Activated B cell treated with CpG ODN at 0.5 μM for 24 hours (primary cell): ENCODE measurements at regions of chr1 and their contacts with region 1.

Region 1: GRCh38 chr1:167627865-167628641 is 2.0 kb upstream of the RCSD1 start:
- DNase-seq: peak; percentile 52
- ATAC-seq: peak; percentile 70
- H3K4me3 Mint-ChIP-seq: peak overlapping the region; percentile 94
- H3K27ac Mint-ChIP-seq: peak overlapping the region; percentile 98
- H3K4me1 Mint-ChIP-seq: peaks cover 76% of the 10 kb centered on the region
- H3K27me3 Mint-ChIP-seq: no peaks in the 10 kb centered on the region
- CTCF ChIP-seq: no peak

Region 2: GRCh38 chr1:167184081-167184480 is 444.0 kb before region 1 on chr1:
- CTCF ChIA-PET with region 1: no interaction called
- POLR2A ChIA-PET with region 1: no interaction called
- intact Hi-C with region 1: no loop called
- DNase-seq: no peak
- ATAC-seq: no peak
- H3K4me3 Mint-ChIP-seq: no peak overlapping the region
- H3K27ac Mint-ChIP-seq: no peak overlapping the region
- H3K4me1 Mint-ChIP-seq: no peaks in the 10 kb centered on the region
- H3K27me3 Mint-ChIP-seq: peaks cover 5% of the 10 kb centered on the region
- CTCF ChIP-seq: no peak

Region 3: DNA sequence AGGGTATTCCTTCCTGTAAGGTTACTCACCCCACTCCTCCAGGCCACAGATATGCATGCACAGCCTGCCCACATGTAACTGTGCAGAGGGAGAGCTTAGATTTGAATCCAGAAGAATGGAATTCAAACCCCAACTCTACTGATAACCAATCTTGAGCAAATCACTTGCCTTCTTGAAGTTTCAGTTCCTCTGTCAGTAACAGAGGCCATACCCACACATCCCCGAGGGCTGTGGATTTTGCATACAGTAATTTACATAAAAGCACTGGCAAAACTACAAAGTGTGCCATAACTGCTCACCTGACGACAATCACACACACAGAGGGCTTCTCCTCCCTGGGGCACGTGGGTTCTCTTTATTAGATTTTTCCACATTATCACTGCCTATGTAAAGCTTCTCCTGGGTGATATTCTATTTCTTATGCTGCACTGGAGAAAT is 128.4 kb before region 1 on chr1:
- CTCF ChIA-PET with region 1: no interaction called
- POLR2A ChIA-PET with region 1: no interaction called
- intact Hi-C with region 1: no loop called
- DNase-seq: peak; percentile 31
- ATAC-seq: peak; percentile 96
- H3K4me3 Mint-ChIP-seq: peak overlapping the region; percentile 64
- H3K27ac Mint-ChIP-seq: peak overlapping the region; percentile 59
- H3K4me1 Mint-ChIP-seq: peaks cover 38% of the 10 kb centered on the region
- H3K27me3 Mint-ChIP-seq: peaks cover 67% of the 10 kb centered on the region
- CTCF ChIP-seq: no peak

Region 4: DNA sequence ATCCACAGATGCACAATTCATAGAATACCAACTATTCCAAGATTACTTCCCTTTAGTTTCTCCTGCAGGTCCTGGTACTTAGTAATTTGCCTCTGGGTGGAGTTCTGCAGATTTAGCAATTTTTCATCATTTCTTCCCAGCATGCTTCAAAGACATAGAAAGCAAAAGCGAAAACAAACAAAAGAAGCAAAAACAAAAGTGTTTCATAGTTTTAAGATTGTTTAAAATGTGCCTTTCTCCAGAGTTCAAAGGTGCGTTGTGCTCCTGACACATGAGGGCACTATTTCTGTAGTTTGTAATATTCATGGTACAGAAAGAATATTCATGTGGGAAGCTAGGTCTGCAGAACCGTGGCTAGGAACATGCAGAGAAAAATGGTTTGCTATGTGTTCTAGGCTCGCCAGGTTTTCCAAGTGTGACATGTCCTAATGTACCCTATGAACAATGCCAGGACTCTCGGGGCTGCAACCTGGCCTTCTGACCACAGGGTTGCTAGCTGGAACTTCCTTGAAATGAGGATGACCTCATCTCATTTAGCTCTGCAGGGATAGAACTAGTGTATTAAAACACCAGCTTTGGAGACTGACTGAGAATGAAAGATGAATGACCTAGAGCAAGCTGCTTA is 28.0 kb before region 1 on chr1:
- CTCF ChIA-PET with region 1: interaction called, 229 read pairs
- POLR2A ChIA-PET with region 1: interaction called, 321 read pairs
- intact Hi-C with region 1: loop called (anchors 1 kb)
- DNase-seq: no peak
- ATAC-seq: peak; percentile 66
- H3K4me3 Mint-ChIP-seq: peak overlapping the region; percentile 48
- H3K27ac Mint-ChIP-seq: peak overlapping the region; percentile 7
- H3K4me1 Mint-ChIP-seq: peaks cover 43% of the 10 kb centered on the region
- H3K27me3 Mint-ChIP-seq: no peaks in the 10 kb centered on the region
- CTCF ChIP-seq: peak; percentile 56

Region 5: GRCh38 chr1:167617153-167618147 is 10.6 kb before region 1 on chr1:
- CTCF ChIA-PET with region 1: interaction called, 14 read pairs
- POLR2A ChIA-PET with region 1: interaction called, 493 read pairs
- intact Hi-C with region 1: loop called (anchors 1 kb)
- DNase-seq: peak; percentile 62
- ATAC-seq: peak; percentile 89
- H3K4me3 Mint-ChIP-seq: peak overlapping the region; percentile 77
- H3K27ac Mint-ChIP-seq: peak overlapping the region; percentile 94
- H3K4me1 Mint-ChIP-seq: peaks cover 92% of the 10 kb centered on the region
- H3K27me3 Mint-ChIP-seq: no peaks in the 10 kb centered on the region
- CTCF ChIP-seq: no peak

Region 6: GRCh38 chr1:167650269-167651160 is 22.5 kb after region 1 on chr1:
- CTCF ChIA-PET with region 1: no interaction called
- POLR2A ChIA-PET with region 1: interaction called, 82 read pairs
- intact Hi-C with region 1: loop called (anchors 1 kb)
- DNase-seq: no peak
- ATAC-seq: peak; percentile 68
- H3K4me3 Mint-ChIP-seq: peak overlapping the region; percentile 73
- H3K27ac Mint-ChIP-seq: peak overlapping the region; percentile 93
- H3K4me1 Mint-ChIP-seq: peaks cover 94% of the 10 kb centered on the region
- H3K27me3 Mint-ChIP-seq: no peaks in the 10 kb centered on the region
- CTCF ChIP-seq: no peak

Region 7: DNA sequence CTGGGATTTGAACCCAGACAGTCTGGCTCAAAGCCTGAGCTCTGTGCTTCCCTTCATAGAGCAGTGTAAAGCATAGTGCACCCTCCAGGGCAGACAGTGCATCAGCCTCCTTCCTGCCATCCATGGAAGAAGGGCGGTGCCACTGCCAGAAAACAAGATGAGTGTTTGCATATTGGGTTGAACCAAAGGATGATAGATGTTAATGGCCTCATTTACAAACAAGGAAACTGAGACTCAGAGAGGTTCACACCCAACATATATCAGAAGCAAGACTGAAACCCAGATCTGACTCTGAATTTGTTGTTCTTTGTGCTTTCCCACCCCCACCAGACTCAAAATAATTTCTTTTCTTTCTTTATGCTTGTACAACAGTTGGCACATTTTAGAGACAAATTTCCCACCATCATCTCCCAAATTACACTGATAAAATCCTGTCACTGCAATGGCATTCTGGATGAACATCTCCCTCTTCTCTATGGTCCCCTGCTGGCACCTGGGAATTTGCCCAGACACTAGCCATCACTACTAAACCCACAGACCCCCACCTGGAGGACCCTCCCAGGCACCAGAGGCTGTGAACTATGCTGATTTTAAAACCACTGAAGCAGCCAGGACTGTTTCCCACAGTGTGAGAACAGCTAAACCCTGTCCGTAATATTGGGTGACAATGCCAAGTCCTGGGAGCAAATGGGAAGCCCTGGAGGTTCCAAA is 48.3 kb after region 1 on chr1:
- CTCF ChIA-PET with region 1: interaction called, 3 read pairs
- POLR2A ChIA-PET with region 1: interaction called, 10 read pairs
- intact Hi-C with region 1: no loop called
- DNase-seq: no peak
- ATAC-seq: no peak
- H3K4me3 Mint-ChIP-seq: peak overlapping the region; percentile 2
- H3K27ac Mint-ChIP-seq: peak overlapping the region; percentile 86
- H3K4me1 Mint-ChIP-seq: peaks cover 34% of the 10 kb centered on the region
- H3K27me3 Mint-ChIP-seq: no peaks in the 10 kb centered on the region
- CTCF ChIP-seq: no peak

Region 8: DNA sequence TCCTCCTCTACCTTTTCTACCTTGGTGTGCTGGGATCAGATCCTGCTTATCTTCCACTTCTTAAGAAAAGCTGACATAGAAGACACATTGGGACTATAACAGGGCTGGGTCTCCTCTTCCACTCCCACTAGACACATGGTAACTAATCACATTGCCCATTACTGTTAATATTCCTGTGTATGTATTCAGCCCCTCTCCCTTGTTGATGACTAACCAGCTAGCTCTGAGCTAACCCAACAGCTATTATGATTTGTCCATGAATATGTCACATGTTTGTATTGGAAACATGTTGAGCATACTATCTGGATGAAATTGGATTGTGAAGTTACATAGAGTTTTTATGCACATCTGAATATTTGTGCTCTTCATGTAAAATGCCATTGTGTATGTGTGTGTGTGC is 146.7 kb after region 1 on chr1:
- CTCF ChIA-PET with region 1: no interaction called
- POLR2A ChIA-PET with region 1: no interaction called
- intact Hi-C with region 1: no loop called
- DNase-seq: no peak
- ATAC-seq: no peak
- H3K4me3 Mint-ChIP-seq: no peak overlapping the region
- H3K27ac Mint-ChIP-seq: no peak overlapping the region
- H3K4me1 Mint-ChIP-seq: no peaks in the 10 kb centered on the region
- H3K27me3 Mint-ChIP-seq: no peaks in the 10 kb centered on the region
- CTCF ChIP-seq: no peak

Region 9: GRCh38 chr1:167803358-167804207 is 175.5 kb after region 1 on chr1:
- CTCF ChIA-PET with region 1: no interaction called
- POLR2A ChIA-PET with region 1: no interaction called
- intact Hi-C with region 1: loop called (anchors 1 kb)
- DNase-seq: peak; percentile 79
- ATAC-seq: peak; percentile 100
- H3K4me3 Mint-ChIP-seq: peak overlapping the region; percentile 48
- H3K27ac Mint-ChIP-seq: no peak overlapping the region
- H3K4me1 Mint-ChIP-seq: peaks cover 22% of the 10 kb centered on the region
- H3K27me3 Mint-ChIP-seq: no peaks in the 10 kb centered on the region
- CTCF ChIP-seq: peak; percentile 54